ENCODE measurements at regions of chr1 and their contacts with region 1.

Region 1: GRCh38 chr1:48061162-48062136 is 64.3 kb upstream of the TRABD2B start:
- DNase-seq: peak; percentile 62

Region 2: DNA sequence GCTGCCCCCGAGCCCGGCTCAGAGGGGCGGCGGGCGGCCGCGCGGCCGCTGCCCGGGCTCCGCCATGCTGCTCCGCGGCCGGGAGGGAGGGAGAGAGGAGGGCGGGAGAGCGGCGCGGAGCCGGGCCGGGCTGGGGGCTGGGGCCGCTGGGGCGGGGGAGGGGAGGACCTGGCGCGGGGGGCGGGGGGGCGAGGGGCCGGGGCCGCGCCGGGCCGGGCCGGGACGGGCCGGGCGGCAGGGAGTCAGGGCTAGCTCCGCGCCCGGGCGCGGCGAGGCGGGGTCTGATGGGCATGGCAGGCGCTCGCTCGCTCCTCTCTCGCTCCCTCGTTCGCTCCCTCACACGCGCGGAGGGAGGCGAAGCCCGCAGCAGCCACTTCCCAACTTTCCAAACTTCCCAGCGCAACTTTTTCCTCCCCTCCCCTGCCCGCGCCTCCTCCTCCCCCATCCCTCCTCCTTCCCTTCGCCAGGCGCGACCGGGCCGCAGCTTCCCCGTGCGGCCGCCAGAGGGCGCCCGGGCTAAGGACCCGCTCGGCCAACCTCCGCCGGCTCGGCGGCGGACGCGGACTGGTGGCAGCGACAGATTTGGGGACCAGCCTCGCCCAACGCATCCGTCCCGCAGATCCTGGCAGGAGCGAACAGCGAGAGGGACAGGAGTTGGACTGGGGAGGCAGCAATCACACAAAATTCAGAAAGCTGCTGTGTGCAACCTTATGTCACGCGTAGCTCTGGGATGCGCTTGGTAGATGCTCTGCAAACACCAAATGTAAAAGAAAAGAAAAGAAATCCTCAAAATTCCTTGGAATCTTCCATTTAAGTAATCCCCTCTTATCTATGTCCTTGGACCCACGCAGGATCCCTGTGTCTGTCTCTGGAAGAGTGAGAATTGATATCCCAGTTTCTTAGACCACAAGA is 63.9 kb before region 1 on chr1 and contains the start of gene TRABD2B:
- CTCF ChIA-PET with region 1: interaction called, 16 read pairs
- POLR2A ChIA-PET with region 1: interaction called, 3 read pairs
- DNase-seq: peak; percentile 91

Region 3: DNA sequence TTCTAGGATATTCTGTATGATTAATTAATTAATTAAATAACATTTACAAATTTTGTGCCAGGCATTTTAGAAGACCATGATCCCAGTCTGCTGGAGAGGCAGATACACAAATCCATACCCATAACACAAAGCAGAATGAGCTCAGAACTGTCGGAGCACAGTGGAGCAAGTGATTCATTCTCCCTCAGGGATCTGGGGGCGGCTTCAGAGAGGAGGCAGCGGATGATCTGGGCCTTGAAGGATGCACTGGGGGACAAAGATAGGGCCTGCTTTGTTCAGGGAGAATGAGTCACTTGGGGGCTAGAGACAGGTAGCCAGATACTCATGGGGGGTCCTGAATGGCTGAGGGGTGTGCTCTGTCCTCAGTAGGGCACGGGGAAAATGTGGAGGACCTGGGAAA is 13.4 kb before region 1 on chr1:
- CTCF ChIA-PET with region 1: interaction called, 36 read pairs
- POLR2A ChIA-PET with region 1: interaction called, 3 read pairs
- DNase-seq: no peak

Region 4: GRCh38 chr1:48082271-48082962 is 21.0 kb after region 1 on chr1:
- CTCF ChIA-PET with region 1: interaction called, 35 read pairs
- POLR2A ChIA-PET with region 1: interaction called, 3 read pairs
- DNase-seq: peak; percentile 27

Region 5: DNA sequence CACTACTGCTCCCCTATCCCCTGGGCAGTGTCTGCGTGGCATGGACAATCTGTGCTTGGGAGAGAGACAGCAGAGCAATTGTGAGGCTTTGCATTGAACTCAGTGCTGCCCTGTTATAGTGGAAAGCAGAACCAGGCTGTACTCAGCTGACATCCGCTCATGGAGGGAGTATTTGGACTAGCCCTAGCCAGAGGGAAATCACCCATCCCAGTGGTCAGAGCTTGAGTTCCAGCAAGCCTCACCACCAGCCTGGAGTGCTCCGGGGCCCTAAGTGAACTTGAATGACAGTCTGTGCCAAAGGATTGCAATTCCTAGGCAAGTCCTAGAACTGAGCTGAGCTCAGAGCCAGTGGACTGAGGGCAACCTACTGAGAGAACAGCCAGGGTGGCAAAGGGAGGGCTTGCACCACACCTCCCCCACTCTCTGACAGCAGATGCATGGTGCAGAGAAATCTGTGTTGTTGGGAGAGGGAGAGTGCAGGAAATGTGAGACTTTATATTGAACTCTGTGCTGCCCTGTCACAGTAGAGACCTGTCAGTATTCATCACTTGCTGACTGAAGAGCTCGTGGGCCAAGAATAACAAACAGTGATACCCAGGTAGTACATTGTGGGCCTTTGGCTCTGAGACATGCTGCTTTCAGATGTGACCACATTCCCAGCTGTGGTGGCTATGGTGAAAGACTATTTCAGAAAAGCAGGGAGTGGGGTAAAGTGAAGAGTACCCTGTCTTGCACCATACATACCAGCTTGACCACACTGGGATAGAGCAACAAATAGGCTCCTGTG is 53.3 kb after region 1 on chr1:
- CTCF ChIA-PET with region 1: no interaction called
- POLR2A ChIA-PET with region 1: no interaction called
- DNase-seq: no peak